ENCODE measurements at regions of chr2 and their contacts with region 1.

Region 1: GRCh38 chr2:224426656-224427055 is 24.7 kb upstream of the FAM124B start:
- DNase-seq: no peak
- ATAC-seq: no peak
- H3K4me3 ChIP-seq: no peak overlapping the region
- H3K27ac ChIP-seq: no peak overlapping the region
- H3K4me1 ChIP-seq: peaks cover 0 to 5% (median 0%) of the 10 kb centered on the region in 9 donors
- H3K27me3 ChIP-seq: no peaks in the 10 kb centered on the region
- CTCF ChIP-seq: no peak

Region 2: DNA sequence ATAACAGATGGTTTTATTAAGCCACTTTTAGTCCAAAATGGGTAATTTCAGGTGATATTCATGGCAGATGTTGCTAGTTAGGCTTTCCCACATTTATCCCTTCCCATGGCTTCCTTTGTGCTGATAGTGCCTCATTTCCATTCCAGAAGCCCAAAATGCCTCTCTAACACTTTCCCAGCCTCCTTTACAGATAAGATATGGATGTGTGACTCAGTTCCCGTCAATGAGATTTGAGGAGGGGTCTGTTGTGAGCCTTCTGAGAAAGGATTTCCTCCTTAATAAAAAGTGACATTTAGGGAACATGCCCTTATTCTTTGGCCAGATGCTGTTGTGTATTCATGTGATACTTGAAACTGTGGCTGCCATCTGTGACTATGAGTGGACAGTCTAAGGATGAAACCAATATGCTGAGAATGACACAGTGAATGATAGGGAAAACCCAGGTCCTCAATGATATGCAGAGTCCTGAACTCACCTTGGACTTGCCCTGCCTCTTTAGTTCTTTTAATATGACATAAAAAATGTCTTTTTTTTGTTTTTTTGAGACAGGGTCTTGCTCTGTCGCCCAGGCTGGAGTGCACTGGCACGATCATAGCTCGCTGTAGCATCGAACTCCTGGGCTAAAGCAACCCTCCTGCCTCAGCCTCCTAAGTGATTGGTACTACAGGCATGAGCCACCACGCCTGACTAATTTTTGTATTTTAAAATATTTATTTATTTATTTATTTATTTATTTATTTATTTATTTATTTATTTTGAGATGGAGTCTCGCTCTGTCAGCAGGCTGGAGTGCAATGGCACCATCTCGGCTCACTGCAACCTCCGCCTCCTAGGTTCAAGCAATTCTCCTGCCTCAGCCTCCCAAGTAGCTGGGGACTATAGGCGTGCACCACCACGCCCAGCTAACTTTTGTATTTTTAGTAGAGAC is 1571.6 kb before region 1 on chr2:
- intact Hi-C with region 1: loop called in 1 of 10 experiments (anchors 5 kb)
- DNase-seq: no peak
- ATAC-seq: peak in 1 of 8 donors; percentile 46
- H3K4me3 ChIP-seq: no peak overlapping the region
- H3K27ac ChIP-seq: no peak overlapping the region
- H3K4me1 ChIP-seq: peaks cover 4 to 12% (median 8%) of the 10 kb centered on the region in 9 donors
- H3K27me3 ChIP-seq: no peaks in the 10 kb centered on the region
- CTCF ChIP-seq: no peak

Region 3: GRCh38 chr2:224319455-224320149 is 107.1 kb before region 1 on chr2:
- intact Hi-C with region 1: no loop called
- DNase-seq: no peak
- ATAC-seq: no peak
- H3K4me3 ChIP-seq: no peak overlapping the region
- H3K27ac ChIP-seq: no peak overlapping the region
- H3K4me1 ChIP-seq: no peaks in the 10 kb centered on the region
- H3K27me3 ChIP-seq: peaks cover 0 to 52% (median 34%) of the 10 kb centered on the region in 7 donors
- CTCF ChIP-seq: no peak